ENCODE measurements at regions of chr1 and their contacts with region 1.

Region 1: DNA sequence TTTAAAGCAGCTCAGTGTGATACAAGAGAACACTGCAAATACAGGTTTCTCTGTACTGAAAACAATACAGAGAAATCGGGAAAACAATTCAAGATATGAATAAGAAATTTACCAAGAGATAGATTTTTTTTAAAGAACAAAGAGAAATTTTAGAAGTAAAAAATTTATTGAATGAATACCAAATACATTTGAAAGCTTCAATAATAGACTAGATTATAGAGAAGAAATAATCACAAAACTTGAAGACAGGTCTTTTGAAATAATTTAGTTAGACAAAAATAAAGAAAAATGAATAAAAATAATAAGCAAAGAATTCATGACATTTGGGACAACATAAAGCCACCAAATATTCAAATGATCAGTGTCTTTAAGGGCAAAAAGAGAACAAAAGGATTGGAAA is 13.6 kb upstream of the FMO4 start:
- DNase-seq: no peak
- ATAC-seq: no peak
- H3K4me3 ChIP-seq: no peak overlapping the region
- H3K27ac ChIP-seq: no peak overlapping the region
- H3K4me1 ChIP-seq: no peaks in the 10 kb centered on the region
- H3K27me3 ChIP-seq: no peaks in the 10 kb centered on the region
- CTCF ChIP-seq: no peak

Region 2: DNA sequence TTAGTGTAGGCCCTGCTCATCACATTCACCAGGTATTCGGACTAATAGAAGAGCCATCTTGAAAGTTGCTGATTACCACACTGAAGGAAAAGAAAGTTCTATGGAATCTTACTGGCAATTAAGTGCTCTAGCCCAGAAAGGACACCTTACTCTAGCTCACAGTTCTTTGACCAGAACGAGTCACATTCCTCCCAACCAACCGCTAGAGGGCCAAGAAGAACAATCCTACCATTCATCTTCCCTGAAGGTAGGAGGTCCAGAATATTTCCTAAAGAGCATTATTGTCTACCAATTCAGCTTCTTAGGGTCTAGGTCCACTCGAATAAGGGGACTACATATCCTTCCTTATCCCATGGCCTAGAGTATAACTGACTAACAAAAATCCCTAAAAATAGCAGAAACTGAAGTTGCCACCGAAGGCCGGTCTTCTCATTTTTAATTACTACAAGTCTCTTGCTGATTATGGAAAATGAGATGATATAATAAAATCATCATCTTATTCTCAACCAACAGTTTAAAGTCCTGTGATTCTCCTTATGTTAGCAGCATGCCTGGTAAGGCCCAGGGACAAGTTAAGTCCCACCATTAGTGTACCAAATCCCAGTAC is 54.8 kb before region 1 on chr1:
- intact Hi-C with region 1: loop called in 1 of 3 experiments (anchors 10 kb)
- DNase-seq: peak in 1 of 6 donors; percentile 40
- ATAC-seq: peak; percentile 77 to 92 (median 86)
- H3K4me3 ChIP-seq: no peak overlapping the region
- H3K27ac ChIP-seq: no peak overlapping the region
- H3K4me1 ChIP-seq: no peaks in the 10 kb centered on the region
- H3K27me3 ChIP-seq: no peaks in the 10 kb centered on the region
- CTCF ChIP-seq: peak; percentile 53 to 72 (median 68)

Region 3: DNA sequence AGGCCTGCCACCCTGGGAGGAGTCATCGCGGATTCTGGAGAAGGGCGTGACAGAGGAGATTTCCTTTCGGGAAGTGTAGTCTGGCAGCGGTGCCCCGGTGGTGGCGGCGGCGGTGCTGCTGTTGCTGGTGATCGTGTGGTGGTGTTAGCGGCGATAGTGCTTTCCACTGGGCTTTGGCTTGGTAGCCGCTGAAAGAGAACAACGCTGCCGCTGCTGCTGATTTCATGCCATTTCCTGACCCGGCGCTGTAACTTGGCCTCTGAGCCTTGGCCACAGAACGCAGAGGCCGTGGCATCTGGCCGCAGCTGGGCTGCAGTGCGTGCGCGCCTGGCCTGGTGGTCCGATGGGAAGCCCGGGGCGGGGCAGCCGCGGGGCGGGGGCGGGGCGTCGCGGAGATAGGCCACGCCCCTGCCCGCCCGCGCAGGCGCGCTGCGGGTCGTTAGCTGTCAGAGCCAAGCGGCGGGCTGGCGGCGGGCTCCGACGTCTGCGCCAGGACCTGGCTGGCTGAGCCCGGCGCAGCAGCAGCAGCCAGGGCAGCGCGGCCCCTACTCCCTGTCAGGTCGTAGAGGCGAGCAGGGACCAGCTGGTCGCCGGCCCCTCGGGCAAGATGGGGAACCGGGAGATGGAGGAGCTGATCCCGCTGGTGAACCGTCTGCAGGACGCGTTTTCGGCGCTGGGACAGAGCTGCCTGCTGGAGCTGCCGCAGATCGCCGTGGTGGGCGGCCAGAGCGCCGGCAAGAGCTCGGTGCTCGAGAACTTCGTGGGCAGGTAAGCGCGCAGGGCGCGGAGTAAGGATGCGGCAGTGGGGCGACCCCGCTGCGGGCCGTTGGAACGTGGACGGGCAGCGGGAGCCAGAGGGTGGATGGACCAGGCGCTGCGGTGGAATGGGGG is 540.9 kb after region 1 on chr1 and contains the start of gene DNM3:
- intact Hi-C with region 1: no loop called
- DNase-seq: peak; percentile 49 to 90 (median 78)
- ATAC-seq: peak; percentile 95 to 99 (median 98)
- H3K4me3 ChIP-seq: peak within 1 kb of the TSS; percentile 41 to 71 (median 56)
- H3K27ac ChIP-seq: peak within 1 kb of the TSS in 1 of 4 donors; percentile 25
- H3K4me1 ChIP-seq: no peaks in the 10 kb centered on the region
- H3K27me3 ChIP-seq: peaks cover 0 to 3% (median 0%) of the 10 kb centered on the region in 4 donors
- CTCF ChIP-seq: no peak
- total RNA-seq, gene DNM3: 0.54 to 1.3 (median 0.90) TPM

Region 4: DNA sequence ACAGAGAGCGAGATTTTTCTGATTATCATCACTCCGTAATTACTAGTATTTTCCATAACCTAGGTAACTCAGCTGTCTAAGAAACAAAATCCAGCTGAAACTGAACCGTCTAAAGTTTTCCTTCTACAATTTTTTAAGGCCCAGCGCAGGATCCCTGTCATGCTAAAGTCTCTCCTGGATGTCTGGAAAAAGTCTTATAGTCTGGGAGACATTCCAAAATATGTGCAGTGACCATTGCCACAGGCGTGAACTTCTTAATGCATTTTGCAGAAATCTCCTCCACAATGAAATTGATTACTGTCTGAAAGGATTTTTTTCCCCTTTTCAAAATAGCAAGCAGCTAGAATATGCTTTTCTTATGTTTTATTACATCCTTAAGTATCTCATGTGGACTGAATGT is 910.8 kb after region 1 on chr1:
- intact Hi-C with region 1: no loop called
- DNase-seq: no peak
- ATAC-seq: no peak
- H3K4me3 ChIP-seq: no peak overlapping the region
- H3K27ac ChIP-seq: no peak overlapping the region
- H3K4me1 ChIP-seq: no peaks in the 10 kb centered on the region
- H3K27me3 ChIP-seq: no peaks in the 10 kb centered on the region
- CTCF ChIP-seq: no peak